ENCODE measurements at regions of chr16 and their contacts with region 1.

Region 1: GRCh38 chr16:14186007-14186794 is 115.1 kb downstream of the MRTFB start:
- DNase-seq: no peak
- H3K4me3 ChIP-seq: peak overlapping the region; percentile 41 to 63 (median 44)
- H3K27ac ChIP-seq: peak overlapping the region; percentile 57 to 78
- H3K4me1 ChIP-seq: no peaks in the 10 kb centered on the region
- H3K27me3 ChIP-seq: no peaks in the 10 kb centered on the region
- CTCF ChIP-seq: peak; percentile 27 to 44 (median 37)
- POLR2A ChIP-seq: no peak

Region 2: GRCh38 chr16:14148569-14148968 is 37.6 kb before region 1 on chr16:
- intact Hi-C with region 1: loop called (anchors 2 kb)
- DNase-seq: no peak
- H3K4me3 ChIP-seq: no peak overlapping the region
- H3K27ac ChIP-seq: no peak overlapping the region
- H3K4me1 ChIP-seq: no peaks in the 10 kb centered on the region
- H3K27me3 ChIP-seq: no peaks in the 10 kb centered on the region
- CTCF ChIP-seq: no peak
- POLR2A ChIP-seq: no peak

Region 3: GRCh38 chr16:14172200-14172782 is 13.9 kb before region 1 on chr16:
- intact Hi-C with region 1: no loop called
- DNase-seq: no peak
- H3K4me3 ChIP-seq: no peak overlapping the region
- H3K27ac ChIP-seq: no peak overlapping the region
- H3K4me1 ChIP-seq: no peaks in the 10 kb centered on the region
- H3K27me3 ChIP-seq: no peaks in the 10 kb centered on the region
- CTCF ChIP-seq: no peak
- POLR2A ChIP-seq: no peak

Region 4: DNA sequence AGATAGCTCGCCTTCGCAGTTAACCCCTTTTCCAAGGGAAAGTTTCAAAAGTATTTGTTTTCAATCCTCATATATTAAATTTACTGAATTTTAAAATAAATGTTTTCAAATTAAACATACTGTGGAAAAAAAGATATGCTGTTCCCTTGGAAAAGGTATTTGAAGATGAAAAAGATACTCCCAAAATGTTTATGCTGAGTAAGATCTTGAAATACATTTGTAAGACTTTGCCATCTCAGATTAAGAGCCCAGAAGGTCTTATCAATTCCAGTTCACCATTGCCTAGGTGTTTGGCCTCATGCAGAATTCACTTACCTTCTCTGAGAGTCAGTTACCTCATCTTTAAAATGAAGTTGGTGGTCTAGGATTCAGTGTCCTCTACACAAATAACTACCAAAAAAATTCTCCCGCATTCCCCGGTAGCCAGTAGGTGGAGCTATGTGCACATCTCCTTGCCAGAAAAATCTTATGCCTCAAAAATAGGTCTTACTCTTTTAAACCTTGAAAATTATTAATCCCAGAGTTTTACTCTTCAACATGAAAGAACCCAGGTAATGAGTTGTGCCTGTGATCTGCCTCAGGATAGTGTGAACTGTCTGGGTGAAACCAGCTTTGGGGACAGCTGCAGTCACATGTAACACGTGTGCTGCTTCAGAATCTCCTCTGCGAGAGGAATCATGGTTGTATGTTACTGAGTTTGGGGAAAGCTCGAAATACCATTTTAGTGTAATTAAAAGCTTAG is 63.3 kb after region 1 on chr16:
- intact Hi-C with region 1: no loop called
- DNase-seq: no peak
- H3K4me3 ChIP-seq: no peak overlapping the region
- H3K27ac ChIP-seq: no peak overlapping the region
- H3K4me1 ChIP-seq: no peaks in the 10 kb centered on the region
- H3K27me3 ChIP-seq: no peaks in the 10 kb centered on the region
- CTCF ChIP-seq: peak; percentile 18 to 62 (median 53)
- POLR2A ChIP-seq: no peak

Region 5: GRCh38 chr16:14310519-14310991 is 124.4 kb after region 1 on chr16:
- intact Hi-C with region 1: no loop called
- DNase-seq: no peak
- H3K4me3 ChIP-seq: no peak overlapping the region
- H3K27ac ChIP-seq: peak overlapping the region; percentile 12 to 67
- H3K4me1 ChIP-seq: peaks cover 0 to 16% of the 10 kb centered on the region in 2 donors
- H3K27me3 ChIP-seq: no peaks in the 10 kb centered on the region
- CTCF ChIP-seq: no peak
- POLR2A ChIP-seq: no peak

Region 6: GRCh38 chr16:15141586-15141985 is 955.4 kb after region 1 on chr16:
- intact Hi-C with region 1: no loop called
- DNase-seq: no peak
- H3K4me3 ChIP-seq: no peak overlapping the region
- H3K27ac ChIP-seq: no peak overlapping the region
- H3K4me1 ChIP-seq: peaks cover 4 to 18% of the 10 kb centered on the region in 2 donors
- H3K27me3 ChIP-seq: no peaks in the 10 kb centered on the region
- CTCF ChIP-seq: no peak
- POLR2A ChIP-seq: no peak